Endothelial cell of umbilical vein (primary cell): ENCODE measurements at regions of chrX and their contacts with region 1.

Region 1: GRCh38 chrX:107025545-107025944 is 25.5 kb upstream of the MORC4 start:
- DNase-seq: peak; percentile 29
- H3K4me3 ChIP-seq: no peak overlapping the region
- H3K27ac ChIP-seq: no peak overlapping the region
- H3K4me1 ChIP-seq: no peaks in the 10 kb centered on the region
- H3K27me3 ChIP-seq: no peaks in the 10 kb centered on the region
- CTCF ChIP-seq: peak; percentile 24 to 39
- POLR2A ChIP-seq: no peak

Region 2: DNA sequence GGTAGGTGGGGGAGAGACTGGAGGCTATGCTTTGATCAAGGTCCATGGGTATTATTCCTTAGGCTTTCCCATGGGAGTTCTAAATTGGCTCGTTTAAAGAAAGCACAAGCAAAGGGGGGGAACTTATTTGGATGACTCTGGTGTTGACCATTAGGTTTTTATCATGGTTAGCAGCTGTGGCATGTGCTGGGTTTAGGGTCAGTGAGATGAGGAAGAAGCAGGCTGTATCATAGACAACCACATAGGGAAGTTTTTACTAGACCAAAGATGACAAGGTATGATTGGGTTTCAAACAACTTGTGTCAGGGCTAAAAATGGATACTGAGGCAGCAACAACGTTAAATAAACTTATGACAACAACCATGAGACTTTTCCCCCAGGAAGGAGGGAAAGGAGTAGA is 278.6 kb after region 1 on chrX:
- CTCF ChIA-PET with region 1: no interaction called
- POLR2A ChIA-PET with region 1: no interaction called
- dilution Hi-C with region 1: no loop called
- intact Hi-C with region 1: no loop called
- DNase-seq: no peak
- H3K4me3 ChIP-seq: no peak overlapping the region
- H3K27ac ChIP-seq: no peak overlapping the region
- H3K4me1 ChIP-seq: no peaks in the 10 kb centered on the region
- H3K27me3 ChIP-seq: no peaks in the 10 kb centered on the region
- CTCF ChIP-seq: no peak
- POLR2A ChIP-seq: no peak

Region 3: GRCh38 chrX:107324499-107325320 is 299.2 kb after region 1 on chrX:
- CTCF ChIA-PET with region 1: interaction called, 17 read pairs
- POLR2A ChIA-PET with region 1: no interaction called
- dilution Hi-C with region 1: no loop called
- intact Hi-C with region 1: loop called (anchors 1 kb)
- DNase-seq: peak; percentile 2
- H3K4me3 ChIP-seq: no peak overlapping the region
- H3K27ac ChIP-seq: no peak overlapping the region
- H3K4me1 ChIP-seq: no peaks in the 10 kb centered on the region
- H3K27me3 ChIP-seq: no peaks in the 10 kb centered on the region
- CTCF ChIP-seq: no peak
- POLR2A ChIP-seq: no peak

Region 4: DNA sequence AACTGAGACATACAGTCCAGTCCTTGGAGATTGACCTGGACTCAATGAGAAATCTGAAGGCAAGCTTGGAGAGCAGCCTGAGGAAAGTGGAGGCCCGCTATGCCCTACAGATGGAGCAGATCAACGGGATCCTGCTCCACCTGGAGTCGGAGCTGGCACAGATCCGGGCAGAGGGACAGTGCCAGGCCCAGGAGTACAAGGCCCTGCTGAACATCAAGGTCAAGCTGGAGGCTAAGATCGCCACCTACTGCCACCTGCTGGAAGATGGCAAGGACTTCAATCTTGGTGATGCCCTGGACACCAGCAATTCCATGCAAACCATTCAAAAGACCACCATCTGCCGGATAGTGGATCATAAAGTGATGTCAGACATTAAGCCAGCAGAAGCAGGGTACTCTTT is 403.5 kb after region 1 on chrX:
- CTCF ChIA-PET with region 1: interaction called, 6 read pairs
- POLR2A ChIA-PET with region 1: no interaction called
- dilution Hi-C with region 1: no loop called
- intact Hi-C with region 1: loop called (anchors 1 kb)
- DNase-seq: no peak
- H3K4me3 ChIP-seq: no peak overlapping the region
- H3K27ac ChIP-seq: no peak overlapping the region
- H3K4me1 ChIP-seq: no peaks in the 10 kb centered on the region
- H3K27me3 ChIP-seq: no peaks in the 10 kb centered on the region
- CTCF ChIP-seq: peak in 1 of 2 donors; percentile 24
- POLR2A ChIP-seq: no peak

Region 5: GRCh38 chrX:108001174-108001814 is 975.7 kb after region 1 on chrX:
- CTCF ChIA-PET with region 1: interaction called, 7 read pairs
- POLR2A ChIA-PET with region 1: no interaction called
- dilution Hi-C with region 1: no loop called
- intact Hi-C with region 1: loop called (anchors 5 kb)
- DNase-seq: peak; percentile 34
- H3K4me3 ChIP-seq: no peak overlapping the region
- H3K27ac ChIP-seq: no peak overlapping the region
- H3K4me1 ChIP-seq: no peaks in the 10 kb centered on the region
- H3K27me3 ChIP-seq: peaks cover 0 to 7% of the 10 kb centered on the region in 2 experiments
- CTCF ChIP-seq: peak; percentile 35 to 58
- POLR2A ChIP-seq: no peak